Calu3 (cell line): ENCODE measurements at regions of chr1 and their contacts with region 1.

Region 1: DNA sequence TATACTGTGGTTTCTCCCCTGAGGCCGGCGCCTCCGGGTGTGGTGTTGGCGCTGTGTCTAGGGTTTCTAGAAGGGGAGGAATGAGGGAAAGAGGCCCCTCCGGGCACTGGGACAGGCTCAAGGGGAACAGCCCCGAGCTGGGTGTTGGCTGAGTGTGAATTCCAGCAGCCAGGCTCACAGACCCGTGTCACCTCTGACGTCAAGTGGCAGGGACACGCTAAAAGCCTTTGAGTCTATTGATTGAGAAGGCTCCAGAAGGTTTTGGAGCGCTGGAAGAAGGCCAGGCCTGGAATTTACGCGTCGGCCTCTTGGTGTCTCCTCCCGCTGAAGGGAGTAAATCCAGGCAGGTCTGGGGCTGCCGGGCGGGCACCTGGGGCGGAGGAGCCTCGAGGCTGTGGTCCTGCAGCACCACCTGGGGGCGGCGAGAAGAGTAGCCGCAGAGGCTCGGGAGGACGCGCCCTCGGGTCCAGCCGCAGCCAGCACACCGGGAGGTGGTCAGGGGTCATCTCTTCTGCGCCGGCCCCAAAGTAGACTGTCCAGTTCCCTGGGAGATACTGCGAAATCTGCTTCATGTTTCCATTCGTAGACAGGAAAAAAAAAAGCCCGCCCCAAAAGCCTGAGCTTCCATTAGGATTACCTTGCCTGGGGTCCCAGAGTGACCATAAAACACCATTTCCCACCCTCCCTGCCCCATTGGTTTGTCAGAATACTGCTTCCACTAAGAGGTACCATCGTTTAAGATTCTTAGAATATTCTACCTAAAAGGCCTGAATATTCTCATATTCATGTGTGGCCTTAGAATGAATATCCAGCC is 61.7 kb downstream of the TLR5 start:
- DNase-seq: peak; percentile 98
- H3K4me3 Mint-ChIP-seq: peak overlapping the region; percentile 51
- H3K27ac Mint-ChIP-seq: peak overlapping the region; percentile 84
- H3K4me1 Mint-ChIP-seq: peaks cover 5% of the 10 kb centered on the region
- H3K27me3 Mint-ChIP-seq: peaks cover 21% of the 10 kb centered on the region
- CTCF ChIP-seq: peak; percentile 95

Region 2: DNA sequence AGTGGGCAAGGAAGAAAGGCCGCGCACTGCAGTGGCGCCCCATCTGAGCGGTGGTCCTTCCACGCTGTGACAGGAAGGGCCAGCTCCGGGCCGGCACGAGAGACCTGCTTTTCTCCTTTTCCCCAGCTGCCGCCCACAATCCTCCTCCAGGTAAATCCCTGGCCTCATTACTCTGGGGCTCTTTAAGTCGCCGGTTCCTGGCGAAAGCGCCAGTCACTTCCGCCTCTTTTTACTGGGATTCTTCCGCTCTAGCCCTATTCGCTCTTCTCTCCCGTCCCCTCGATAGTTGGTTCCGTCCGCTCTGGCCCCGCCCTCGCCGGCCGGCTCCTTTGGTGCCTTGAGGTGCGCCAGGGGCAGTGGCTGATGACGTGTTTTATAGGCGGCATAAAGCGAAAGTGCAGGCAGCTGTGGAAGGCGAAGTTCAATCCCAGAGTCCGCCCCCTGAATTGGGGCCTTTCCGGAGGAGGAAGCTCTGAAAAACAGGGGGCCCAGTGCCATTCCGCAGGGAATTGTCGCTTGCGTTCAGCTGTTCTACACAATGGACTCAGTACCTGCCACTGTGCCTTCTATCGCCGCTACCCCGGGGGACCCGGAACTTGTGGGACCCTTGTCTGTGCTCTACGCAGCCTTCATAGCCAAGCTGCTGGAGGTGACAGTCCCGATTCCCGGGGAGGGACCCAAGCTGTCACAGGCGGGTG is 437.3 kb before region 1 on chr1:
- CTCF ChIA-PET with region 1: no interaction called
- intact Hi-C with region 1: loop called (anchors 10 kb)
- DNase-seq: peak; percentile 99
- H3K4me3 Mint-ChIP-seq: peak overlapping the region; percentile 97
- H3K27ac Mint-ChIP-seq: peak overlapping the region; percentile 93
- H3K4me1 Mint-ChIP-seq: peaks cover 8% of the 10 kb centered on the region
- H3K27me3 Mint-ChIP-seq: no peaks in the 10 kb centered on the region
- CTCF ChIP-seq: no peak

Region 3: GRCh38 chr1:222680080-222680479 is 401.3 kb before region 1 on chr1:
- CTCF ChIA-PET with region 1: no interaction called
- intact Hi-C with region 1: no loop called
- DNase-seq: no peak
- H3K4me3 Mint-ChIP-seq: no peak overlapping the region
- H3K27ac Mint-ChIP-seq: no peak overlapping the region
- H3K4me1 Mint-ChIP-seq: no peaks in the 10 kb centered on the region
- H3K27me3 Mint-ChIP-seq: no peaks in the 10 kb centered on the region
- CTCF ChIP-seq: no peak

Region 4: GRCh38 chr1:222732216-222733159 is 348.9 kb before region 1 on chr1:
- CTCF ChIA-PET with region 1: no interaction called
- intact Hi-C with region 1: loop called (anchors 1 kb)
- DNase-seq: no peak
- H3K4me3 Mint-ChIP-seq: no peak overlapping the region
- H3K27ac Mint-ChIP-seq: no peak overlapping the region
- H3K4me1 Mint-ChIP-seq: no peaks in the 10 kb centered on the region
- H3K27me3 Mint-ChIP-seq: no peaks in the 10 kb centered on the region
- CTCF ChIP-seq: no peak

Region 5: GRCh38 chr1:222792744-222793143 is 288.6 kb before region 1 on chr1:
- CTCF ChIA-PET with region 1: interaction called, 11 read pairs
- intact Hi-C with region 1: loop called (anchors 1 kb)
- DNase-seq: no peak
- H3K4me3 Mint-ChIP-seq: no peak overlapping the region
- H3K27ac Mint-ChIP-seq: no peak overlapping the region
- H3K4me1 Mint-ChIP-seq: no peaks in the 10 kb centered on the region
- H3K27me3 Mint-ChIP-seq: peaks cover 20% of the 10 kb centered on the region
- CTCF ChIP-seq: peak; percentile 55

Region 6: GRCh38 chr1:223233410-223234169 is 152.2 kb after region 1 on chr1:
- CTCF ChIA-PET with region 1: no interaction called
- intact Hi-C with region 1: no loop called
- DNase-seq: peak; percentile 58
- H3K4me3 Mint-ChIP-seq: peak overlapping the region; percentile 19
- H3K27ac Mint-ChIP-seq: peak overlapping the region; percentile 75
- H3K4me1 Mint-ChIP-seq: peaks cover 35% of the 10 kb centered on the region
- H3K27me3 Mint-ChIP-seq: no peaks in the 10 kb centered on the region
- CTCF ChIP-seq: no peak